Naive thymus-derived CD4-positive, alpha-beta T cell (primary cell): ENCODE measurements at regions of chr1 and their contacts with region 1.

Region 1: DNA sequence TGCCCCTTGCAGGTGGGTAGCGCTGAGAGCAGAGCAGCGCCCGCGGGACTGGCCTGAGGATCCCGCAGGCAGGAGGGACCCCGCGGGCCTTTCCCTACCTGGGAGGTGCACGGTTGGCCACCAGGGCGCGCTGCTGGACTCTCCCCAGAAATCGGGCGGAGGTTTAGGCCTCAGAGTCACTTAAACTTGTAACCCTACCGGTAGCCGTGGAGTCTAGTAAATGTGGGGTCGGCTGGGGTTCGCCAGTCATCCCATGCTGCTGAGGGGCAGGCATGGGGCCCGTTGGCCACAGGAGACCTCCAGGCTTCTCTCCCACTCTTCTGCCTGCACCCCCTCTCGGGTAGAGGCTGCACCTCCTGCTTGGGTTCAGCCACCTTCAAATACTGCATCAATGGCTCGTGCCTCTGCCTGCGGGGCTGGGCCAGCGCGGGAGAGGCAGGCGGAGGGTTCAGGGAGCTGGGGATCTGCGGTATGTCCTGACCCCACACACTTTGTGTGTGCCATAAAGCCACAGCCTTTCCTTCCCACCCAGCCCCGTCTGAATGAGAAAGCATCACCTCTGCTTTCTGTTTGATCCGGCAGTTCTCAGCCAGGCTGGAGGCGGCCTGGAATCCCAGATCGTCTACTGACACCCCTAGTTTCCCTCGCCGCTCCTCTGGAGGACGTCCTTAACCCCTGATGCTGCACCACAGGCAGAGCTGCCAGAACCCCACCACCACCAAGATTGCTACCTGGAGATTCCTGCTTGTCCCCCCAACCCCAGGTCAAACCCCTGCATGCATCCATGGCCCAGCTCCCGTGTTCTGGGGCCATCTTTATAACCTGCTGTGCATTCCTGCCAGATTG is 12.3 kb upstream of the GSTM4 start:
- DNase-seq: peak; percentile 65 to 91 (median 79)
- ATAC-seq: peak; percentile 94
- H3K4me3 ChIP-seq: no peak overlapping the region
- H3K4me3 Mint-ChIP-seq: no peak overlapping the region
- H3K27ac ChIP-seq: no peak overlapping the region
- H3K27ac Mint-ChIP-seq: peak overlapping the region in 3 of 9 donors; percentile 22 to 81 (median 38)
- H3K4me1 ChIP-seq: peaks cover 6 to 7% of the 10 kb centered on the region in 2 donors
- H3K4me1 Mint-ChIP-seq: peaks cover 3 to 15% (median 5%) of the 10 kb centered on the region in 7 donors
- H3K27me3 ChIP-seq: no peaks in the 10 kb centered on the region
- H3K27me3 Mint-ChIP-seq: peaks cover 0 to 7% (median 0%) of the 10 kb centered on the region in 5 donors

Region 2: GRCh38 chr1:109620841-109621286 is 22.7 kb before region 1 on chr1:
- CTCF ChIA-PET with region 1: interaction called, 23 read pairs
- POLR2A ChIA-PET with region 1: no interaction called
- intact Hi-C with region 1: no loop called
- DNase-seq: peak; percentile 92 to 98 (median 95)
- ATAC-seq: peak; percentile 90
- H3K4me3 ChIP-seq: peak overlapping the region; percentile 78
- H3K4me3 Mint-ChIP-seq: peak overlapping the region; percentile 90 to 98 (median 94)
- H3K27ac ChIP-seq: peak overlapping the region; percentile 90
- H3K27ac Mint-ChIP-seq: peak overlapping the region; percentile 92 to 98 (median 96)
- H3K4me1 ChIP-seq: peaks cover 14 to 43% of the 10 kb centered on the region in 2 donors
- H3K4me1 Mint-ChIP-seq: peaks cover 52 to 79% (median 68%) of the 10 kb centered on the region in 7 donors
- H3K27me3 ChIP-seq: no peaks in the 10 kb centered on the region
- H3K27me3 Mint-ChIP-seq: no peaks in the 10 kb centered on the region

Region 3: DNA sequence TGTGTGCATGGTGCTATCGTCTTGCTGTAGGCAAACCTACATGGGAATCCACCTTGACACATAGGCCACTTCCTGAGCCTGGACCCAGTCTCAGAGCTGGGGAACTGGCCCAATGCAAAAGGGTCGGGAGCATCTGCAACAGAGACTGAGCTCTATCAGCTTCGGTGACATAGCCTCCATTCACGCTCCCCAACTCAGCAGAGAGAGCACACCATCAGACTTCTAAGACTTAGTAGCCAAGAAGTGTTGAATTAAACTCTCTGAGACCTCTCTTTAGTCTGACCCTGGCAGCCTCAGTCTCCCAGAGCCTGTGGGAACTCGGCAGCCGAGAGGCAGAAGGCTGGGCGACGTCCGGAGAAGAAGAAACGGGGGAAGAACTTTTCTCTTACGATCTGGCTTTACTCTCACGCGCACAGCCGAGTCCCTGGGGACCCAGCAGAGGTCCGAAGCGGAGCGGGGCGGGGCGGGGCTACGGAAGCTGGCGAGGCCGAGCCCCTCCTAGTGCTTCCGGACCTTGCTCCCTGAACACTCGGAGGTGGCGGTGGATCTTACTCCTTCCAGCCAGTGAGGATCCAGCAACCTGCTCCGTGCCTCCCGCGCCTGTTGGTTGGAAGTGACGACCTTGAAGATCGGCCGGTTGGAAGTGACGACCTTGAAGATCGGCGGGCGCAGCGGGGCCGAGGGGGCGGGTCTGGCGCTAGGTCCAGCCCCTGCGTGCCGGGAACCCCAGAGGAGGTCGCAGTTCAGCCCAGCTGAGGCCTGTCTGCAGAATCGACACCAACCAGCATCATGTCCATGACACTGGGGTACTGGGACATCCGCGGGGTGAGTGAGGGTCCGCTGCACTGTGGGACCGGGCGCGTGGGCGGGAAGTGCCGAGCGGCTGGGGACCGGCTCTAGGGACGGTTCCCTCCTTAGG is 12.3 kb after region 1 on chr1 and contains the start of gene GSTM4:
- CTCF ChIA-PET with region 1: interaction called, 42 read pairs
- POLR2A ChIA-PET with region 1: interaction called, 4 read pairs
- intact Hi-C with region 1: loop called (anchors 1 kb)
- DNase-seq: peak in 8 of 9 donors; percentile 18 to 76 (median 38)
- ATAC-seq: peak; percentile 88
- H3K4me3 ChIP-seq: peak within 1 kb of the TSS; percentile 89
- H3K4me3 Mint-ChIP-seq: peak within 1 kb of the TSS; percentile 87 to 96 (median 94)
- H3K27ac ChIP-seq: peak within 1 kb of the TSS; percentile 67
- H3K27ac Mint-ChIP-seq: peak within 1 kb of the TSS; percentile 76 to 94 (median 87)
- H3K4me1 ChIP-seq: peaks cover 6 to 9% of the 10 kb centered on the region in 2 donors
- H3K4me1 Mint-ChIP-seq: peaks cover 10 to 36% (median 24%) of the 10 kb centered on the region in 7 donors
- H3K27me3 ChIP-seq: no peaks in the 10 kb centered on the region
- H3K27me3 Mint-ChIP-seq: peaks cover 0 to 28% (median 0%) of the 10 kb centered on the region in 5 donors
- total RNA-seq, gene GSTM4: 14.2 to 28.4 (median 16.1) TPM

Region 4: DNA sequence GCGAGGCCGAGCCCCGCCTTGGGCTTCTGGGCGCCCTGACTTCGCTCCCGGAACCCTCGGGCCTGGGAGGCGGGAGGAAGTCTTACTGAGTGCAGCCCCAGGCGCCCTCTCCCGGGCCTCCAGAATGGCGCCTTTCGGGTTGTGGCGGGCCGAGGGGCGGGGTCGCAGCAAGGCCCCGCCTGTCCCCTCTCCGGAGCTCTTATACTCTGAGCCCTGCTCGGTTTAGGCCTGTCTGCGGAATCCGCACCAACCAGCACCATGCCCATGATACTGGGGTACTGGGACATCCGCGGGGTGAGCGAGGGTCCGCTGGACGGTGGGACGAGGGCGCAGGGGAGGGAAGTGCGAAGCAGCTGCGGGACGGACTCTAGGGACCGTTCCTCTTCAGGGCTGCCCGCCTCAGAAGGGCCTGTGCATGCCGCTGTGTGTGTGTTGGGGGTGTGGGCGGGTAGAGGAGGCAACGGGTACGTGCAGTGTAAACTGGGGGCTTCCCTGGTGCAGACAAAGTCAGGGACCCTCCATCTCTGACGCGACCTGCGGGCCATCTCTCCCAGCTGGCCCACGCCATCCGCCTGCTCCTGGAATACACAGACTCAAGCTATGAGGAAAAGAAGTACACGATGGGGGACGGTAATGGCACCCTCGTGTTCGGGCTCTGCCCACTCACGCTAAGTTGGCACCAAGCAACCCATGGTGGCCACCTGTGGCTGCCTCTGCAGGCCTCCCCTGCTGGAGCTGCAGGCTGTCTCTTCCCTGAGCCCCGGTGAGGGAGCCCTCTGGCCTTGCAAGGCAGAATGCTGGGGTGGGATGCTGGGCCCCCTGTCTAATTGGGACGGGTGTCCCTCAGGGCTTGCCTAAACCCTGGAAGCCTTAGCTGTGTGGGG is 44.2 kb after region 1 on chr1 and contains the start of gene GSTM1:
- CTCF ChIA-PET with region 1: no interaction called
- POLR2A ChIA-PET with region 1: no interaction called
- intact Hi-C with region 1: loop called in 1 of 2 experiments (anchors 2 kb)
- DNase-seq: peak in 5 of 9 donors; percentile 74 to 89 (median 82)
- ATAC-seq: no peak
- H3K4me3 ChIP-seq: no peak within 1 kb of the TSS
- H3K4me3 Mint-ChIP-seq: peak within 1 kb of the TSS in 7 of 10 donors; percentile 81 to 99 (median 90)
- H3K27ac ChIP-seq: peak within 1 kb of the TSS; percentile 70
- H3K27ac Mint-ChIP-seq: peak within 1 kb of the TSS in 6 of 9 donors; percentile 88 to 96 (median 94)
- H3K4me1 ChIP-seq: no peaks in the 10 kb centered on the region
- H3K4me1 Mint-ChIP-seq: peaks cover 0 to 27% (median 8%) of the 10 kb centered on the region in 7 donors
- H3K27me3 ChIP-seq: no peaks in the 10 kb centered on the region
- H3K27me3 Mint-ChIP-seq: no peaks in the 10 kb centered on the region
- total RNA-seq, gene GSTM1: 45.9 to 83.6 TPM in 2 of 5 experiments, not detected in the others

Region 5: GRCh38 chr1:109773146-109773899 is 129.7 kb after region 1 on chr1:
- CTCF ChIA-PET with region 1: interaction called, 116 read pairs
- POLR2A ChIA-PET with region 1: interaction called, 8 read pairs
- intact Hi-C with region 1: loop called (anchors 1 kb)
- DNase-seq: peak; percentile 34 to 79 (median 69)
- ATAC-seq: peak; percentile 87
- H3K4me3 ChIP-seq: no peak overlapping the region
- H3K4me3 Mint-ChIP-seq: no peak overlapping the region
- H3K27ac ChIP-seq: no peak overlapping the region
- H3K27ac Mint-ChIP-seq: peak overlapping the region in 1 of 9 donors; percentile 73
- H3K4me1 ChIP-seq: peaks cover 0 to 4% of the 10 kb centered on the region in 2 donors
- H3K4me1 Mint-ChIP-seq: peaks cover 0 to 21% (median 6%) of the 10 kb centered on the region in 7 donors
- H3K27me3 ChIP-seq: no peaks in the 10 kb centered on the region
- H3K27me3 Mint-ChIP-seq: peaks cover 0 to 12% (median 5%) of the 10 kb centered on the region in 5 donors

Region 6: DNA sequence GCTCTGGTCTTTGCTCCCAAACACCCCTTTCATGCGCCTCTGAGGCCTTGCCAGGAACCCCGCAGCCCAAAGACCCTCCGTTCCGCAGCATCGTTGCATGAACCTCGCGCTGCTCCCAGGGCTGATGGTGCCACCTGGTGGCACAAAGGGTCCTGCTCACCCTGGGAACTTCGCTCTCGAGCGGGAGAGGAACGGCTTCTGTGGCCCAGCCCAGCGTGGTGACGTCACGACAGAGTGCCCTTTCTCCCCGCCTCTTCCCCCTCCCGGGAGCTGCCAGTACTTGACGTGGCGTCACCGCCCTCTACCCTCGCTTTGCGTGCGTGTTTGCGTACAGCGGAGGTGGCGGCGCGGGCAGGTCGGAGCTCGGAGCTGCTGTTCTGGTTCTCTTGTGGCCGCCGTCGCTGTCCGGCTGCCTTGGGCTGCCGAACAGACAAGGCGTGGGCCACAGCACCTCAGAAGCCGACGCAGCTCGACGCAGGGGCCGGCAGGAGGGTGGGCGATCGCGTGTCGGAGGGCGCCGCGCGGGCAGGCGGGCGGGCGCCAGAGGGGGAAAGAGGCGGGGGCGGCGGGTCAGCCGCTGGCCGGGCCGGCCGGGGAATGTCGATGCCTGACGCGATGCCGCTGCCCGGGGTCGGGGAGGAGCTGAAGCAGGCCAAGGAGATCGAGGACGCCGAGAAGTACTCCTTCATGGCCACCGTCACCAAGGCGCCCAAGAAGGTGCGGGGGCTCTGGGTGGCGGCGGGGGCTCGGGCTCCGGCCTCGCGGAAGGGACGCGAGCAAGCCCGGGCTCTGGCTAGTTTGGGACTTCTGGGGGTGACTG is 341.1 kb after region 1 on chr1 and contains the start of gene AHCYL1:
- CTCF ChIA-PET with region 1: interaction called, 42 read pairs
- POLR2A ChIA-PET with region 1: interaction called, 5 read pairs
- intact Hi-C with region 1: loop called (anchors 1 kb)
- DNase-seq: peak; percentile 97 to 99 (median 99)
- ATAC-seq: peak; percentile 99
- H3K4me3 ChIP-seq: peak within 1 kb of the TSS; percentile 72
- H3K4me3 Mint-ChIP-seq: peak within 1 kb of the TSS; percentile 87 to 100 (median 97)
- H3K27ac ChIP-seq: peak within 1 kb of the TSS; percentile 92
- H3K27ac Mint-ChIP-seq: peak within 1 kb of the TSS; percentile 94 to 99 (median 98)
- H3K4me1 ChIP-seq: peaks cover 22 to 24% of the 10 kb centered on the region in 2 donors
- H3K4me1 Mint-ChIP-seq: peaks cover 22 to 49% (median 42%) of the 10 kb centered on the region in 7 donors
- H3K27me3 ChIP-seq: no peaks in the 10 kb centered on the region
- H3K27me3 Mint-ChIP-seq: peaks cover 0 to 6% (median 0%) of the 10 kb centered on the region in 5 donors
- total RNA-seq, gene AHCYL1: 16.6 to 60.1 (median 37.1) TPM

Region 7: GRCh38 chr1:110106013-110106941 is 462.7 kb after region 1 on chr1:
- CTCF ChIA-PET with region 1: no interaction called
- POLR2A ChIA-PET with region 1: no interaction called
- intact Hi-C with region 1: loop called in 1 of 2 experiments (anchors 5 kb)
- DNase-seq: peak; percentile 19 to 53 (median 47)
- ATAC-seq: peak; percentile 85
- H3K4me3 ChIP-seq: no peak overlapping the region
- H3K4me3 Mint-ChIP-seq: no peak overlapping the region
- H3K27ac ChIP-seq: no peak overlapping the region
- H3K27ac Mint-ChIP-seq: no peak overlapping the region
- H3K4me1 ChIP-seq: no peaks in the 10 kb centered on the region
- H3K4me1 Mint-ChIP-seq: peaks cover 0 to 6% (median 0%) of the 10 kb centered on the region in 7 donors
- H3K27me3 ChIP-seq: no peaks in the 10 kb centered on the region
- H3K27me3 Mint-ChIP-seq: peaks cover 6 to 20% (median 10%) of the 10 kb centered on the region in 5 donors